Esophagus squamous epithelium (tissue), 5 donors: ENCODE measurements at regions of chr3 and their contacts with region 1.

Region 1: DNA sequence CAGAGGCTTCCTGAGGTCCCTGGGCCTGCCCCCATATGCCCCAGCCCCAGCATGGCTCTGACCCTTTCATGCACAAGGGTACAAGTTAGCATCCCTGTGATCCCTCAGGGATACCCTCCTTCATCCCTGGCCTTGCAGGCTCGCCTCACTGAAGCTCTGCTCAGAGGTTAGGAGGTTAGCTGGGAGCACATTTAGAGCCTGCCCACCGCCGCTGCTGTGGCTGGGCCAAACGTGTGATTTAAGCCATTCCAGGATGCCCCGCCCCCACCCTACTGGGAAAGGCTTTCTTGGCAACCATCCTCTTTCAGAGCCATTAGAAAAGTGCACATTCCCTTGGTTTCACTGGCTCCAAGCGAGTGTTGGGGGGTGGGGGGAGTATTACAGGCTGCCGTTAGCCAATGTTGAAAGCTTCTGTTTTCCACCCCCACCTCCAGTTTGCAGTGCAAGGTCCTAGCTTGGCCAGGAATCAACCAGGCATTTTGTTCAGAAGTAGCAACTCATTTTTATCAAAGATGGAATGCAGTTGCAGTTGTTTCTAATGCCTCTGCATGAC is 6.3 kb upstream of the HES1 start:
- DNase-seq: no peak
- H3K4me3 ChIP-seq: no peak overlapping the region
- H3K27ac ChIP-seq: no peak overlapping the region
- H3K4me1 ChIP-seq: peaks cover 13 to 56% (median 32%) of the 10 kb centered on the region in 3 donors
- H3K27me3 ChIP-seq: peaks cover 0 to 18% (median 0%) of the 10 kb centered on the region in 4 donors
- CTCF ChIP-seq: no peak
- POLR2A ChIP-seq: no peak

Region 2: DNA sequence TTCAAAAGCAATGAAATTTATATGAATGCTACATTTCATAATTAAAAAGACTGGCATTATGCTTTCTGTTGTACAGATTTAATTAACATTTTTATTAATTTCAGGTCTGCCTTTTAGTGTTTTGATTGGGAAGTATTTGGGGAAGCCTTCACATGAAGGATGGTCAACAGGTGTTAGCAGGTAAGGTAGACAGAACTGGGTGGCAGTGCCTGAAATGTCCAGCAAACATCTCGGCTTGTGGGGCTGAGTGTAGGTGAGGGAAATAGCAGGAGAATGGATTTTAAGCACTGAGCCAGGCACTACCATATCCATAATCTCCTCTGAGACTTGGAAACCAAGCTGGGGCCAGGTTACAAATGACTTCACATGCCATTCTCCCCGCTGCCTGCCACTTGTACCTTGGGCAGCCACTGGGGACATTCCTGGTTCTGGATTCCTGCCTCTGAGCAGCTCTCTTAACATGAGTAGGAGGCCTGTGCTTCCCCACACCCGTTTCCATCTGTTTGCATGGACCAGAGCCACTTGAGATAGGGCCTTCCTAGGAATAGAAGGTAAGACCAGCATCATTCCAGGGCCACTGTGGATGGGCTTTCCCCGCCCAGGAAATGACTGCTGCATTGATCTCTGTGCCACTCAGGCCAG is 119.6 kb before region 1 on chr3:
- intact Hi-C with region 1: loop called (anchors 10 kb)
- DNase-seq: no peak
- H3K4me3 ChIP-seq: no peak overlapping the region
- H3K27ac ChIP-seq: no peak overlapping the region
- H3K4me1 ChIP-seq: peaks cover 0 to 12% (median 6%) of the 10 kb centered on the region in 3 donors
- H3K27me3 ChIP-seq: peaks cover 0 to 18% (median 0%) of the 10 kb centered on the region in 4 donors
- CTCF ChIP-seq: no peak
- POLR2A ChIP-seq: no peak